ENCODE measurements at regions of chr6 and their contacts with region 1.

Region 1: DNA sequence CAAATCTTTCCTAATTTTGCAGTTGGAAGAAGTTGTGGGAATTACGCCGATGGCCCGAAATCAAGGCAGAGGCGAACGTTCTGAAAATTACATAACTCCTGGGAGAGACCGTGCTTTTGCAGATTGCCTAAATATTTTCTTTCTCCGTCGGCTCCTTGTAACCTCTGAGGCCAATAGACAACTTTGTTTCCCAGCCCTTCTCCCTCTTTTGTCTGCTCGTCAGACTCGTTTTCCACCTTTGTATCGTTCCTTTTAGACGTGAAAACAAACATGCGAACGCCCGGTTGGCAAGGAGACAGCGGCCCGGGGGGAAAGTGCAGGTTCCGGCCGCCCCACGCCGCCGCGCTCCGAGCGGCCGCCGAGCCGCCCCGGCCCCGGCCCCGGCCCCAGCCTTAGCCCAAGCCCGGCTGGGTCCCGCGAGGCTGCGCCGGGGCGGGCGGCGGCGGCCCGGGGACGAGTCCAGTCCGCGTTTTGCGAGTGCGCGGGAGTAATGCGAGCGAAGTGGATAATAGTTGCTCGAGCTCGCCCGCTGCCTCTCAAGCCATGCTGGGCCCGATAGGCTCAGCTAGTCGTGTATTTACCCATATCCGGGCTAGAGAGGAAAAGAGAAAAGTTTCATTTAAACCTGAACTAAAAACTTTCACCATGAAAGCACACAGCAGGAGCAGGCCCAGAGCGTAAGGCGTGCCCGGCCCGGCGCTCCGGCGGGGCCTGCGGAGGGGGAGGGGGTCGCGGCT is at the start of gene ARID1B:
- DNase-seq: peak; percentile 93
- H3K4me3 ChIP-seq: peak within 1 kb of the TSS; percentile 91 to 94 (median 92)
- H3K27ac ChIP-seq: peak within 1 kb of the TSS; percentile 97 to 99 (median 98)
- H3K4me1 ChIP-seq: peaks cover 3 to 38% (median 32%) of the 10 kb centered on the region in 4 donors
- H3K27me3 ChIP-seq: no peaks in the 10 kb centered on the region
- CTCF ChIP-seq: no peak
- EP300 ChIP-seq: no peak
- POLR2A ChIP-seq: peak in 1 of 2 donors; percentile 75
- total RNA-seq, gene ARID1B: 69.6 to 115 (median 78.8) TPM

Region 2: DNA sequence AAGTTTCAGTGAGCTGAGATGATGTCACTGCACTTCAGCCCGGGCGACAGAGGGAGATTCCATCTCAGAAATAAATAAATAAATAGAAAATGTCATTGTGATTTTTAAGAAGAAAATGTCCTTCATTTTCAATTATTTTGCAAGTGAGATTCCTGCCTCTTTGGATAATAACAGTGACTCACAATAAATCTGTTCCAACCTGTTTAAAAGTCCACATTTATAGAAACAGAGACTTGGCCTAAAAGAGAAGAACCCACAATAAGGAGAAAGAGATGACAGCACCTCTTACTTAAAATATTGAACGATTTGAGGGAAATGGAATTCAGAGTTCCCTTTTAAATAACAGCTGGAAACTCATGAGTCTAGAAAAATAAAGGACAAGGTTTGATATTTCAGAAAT is 948.0 kb before region 1 on chr6:
- intact Hi-C with region 1: no loop called
- DNase-seq: no peak
- H3K4me3 ChIP-seq: no peak overlapping the region
- H3K27ac ChIP-seq: no peak overlapping the region
- H3K4me1 ChIP-seq: no peaks in the 10 kb centered on the region
- H3K27me3 ChIP-seq: no peaks in the 10 kb centered on the region
- CTCF ChIP-seq: no peak
- EP300 ChIP-seq: no peak
- POLR2A ChIP-seq: no peak

Region 3: GRCh38 chr6:156564127-156564806 is 212.7 kb before region 1 on chr6:
- intact Hi-C with region 1: loop called (anchors 5 kb)
- DNase-seq: peak; percentile 90
- H3K4me3 ChIP-seq: no peak overlapping the region
- H3K27ac ChIP-seq: peak overlapping the region in 2 of 4 donors; percentile 18 to 27
- H3K4me1 ChIP-seq: peaks cover 0 to 15% (median 6%) of the 10 kb centered on the region in 4 donors
- H3K27me3 ChIP-seq: no peaks in the 10 kb centered on the region
- CTCF ChIP-seq: peak; percentile 80 to 93 (median 90)
- EP300 ChIP-seq: no peak
- POLR2A ChIP-seq: no peak

Region 4: DNA sequence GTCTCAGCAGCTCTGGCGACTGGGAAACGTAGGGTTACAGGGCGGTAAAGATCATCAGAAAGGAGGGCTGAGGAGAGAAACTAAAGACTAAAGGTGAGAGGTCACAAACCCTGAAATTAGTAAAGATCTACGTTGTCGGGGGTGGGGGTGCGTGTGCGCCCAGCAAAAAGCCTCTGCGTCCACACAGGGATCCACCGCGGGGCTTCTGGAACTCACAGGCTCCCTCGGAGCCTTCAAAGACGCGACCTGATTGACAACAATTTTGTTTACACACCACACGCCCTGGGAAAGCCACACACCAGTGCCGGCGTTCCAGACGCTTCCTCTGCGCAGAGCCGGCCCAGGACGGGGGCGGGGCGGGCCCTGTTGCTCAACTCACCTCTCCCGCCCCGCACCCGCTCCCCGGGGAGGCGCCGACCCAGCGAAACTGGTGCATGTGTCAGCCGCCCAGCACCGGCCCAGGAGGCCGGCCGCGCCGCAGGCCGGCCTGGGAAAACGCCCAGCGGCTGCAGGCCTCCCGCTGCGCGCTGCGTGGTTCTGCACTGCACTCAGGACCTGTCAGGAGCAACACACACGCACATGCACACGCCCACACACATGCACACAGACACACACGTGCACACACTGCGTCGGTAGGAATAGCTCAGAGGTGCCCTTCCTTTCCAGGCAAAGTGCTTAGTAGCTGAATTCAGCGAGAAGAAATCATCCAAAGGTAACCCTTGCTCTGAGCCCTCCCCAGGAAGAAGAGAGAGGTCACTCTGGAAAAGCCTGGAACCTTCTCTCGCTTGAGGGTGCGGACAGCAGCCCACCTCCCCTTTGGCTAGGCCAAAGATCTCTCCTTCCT is 57.1 kb before region 1 on chr6:
- intact Hi-C with region 1: loop called (anchors 1 kb)
- DNase-seq: peak; percentile 98
- H3K4me3 ChIP-seq: peak overlapping the region; percentile 28 to 51 (median 41)
- H3K27ac ChIP-seq: peak overlapping the region; percentile 80 to 92 (median 90)
- H3K4me1 ChIP-seq: peaks cover 0 to 25% (median 24%) of the 10 kb centered on the region in 4 donors
- H3K27me3 ChIP-seq: no peaks in the 10 kb centered on the region
- CTCF ChIP-seq: no peak
- EP300 ChIP-seq: peak in 1 of 4 donors; percentile 63
- POLR2A ChIP-seq: peak; percentile 21 to 33

Region 5: DNA sequence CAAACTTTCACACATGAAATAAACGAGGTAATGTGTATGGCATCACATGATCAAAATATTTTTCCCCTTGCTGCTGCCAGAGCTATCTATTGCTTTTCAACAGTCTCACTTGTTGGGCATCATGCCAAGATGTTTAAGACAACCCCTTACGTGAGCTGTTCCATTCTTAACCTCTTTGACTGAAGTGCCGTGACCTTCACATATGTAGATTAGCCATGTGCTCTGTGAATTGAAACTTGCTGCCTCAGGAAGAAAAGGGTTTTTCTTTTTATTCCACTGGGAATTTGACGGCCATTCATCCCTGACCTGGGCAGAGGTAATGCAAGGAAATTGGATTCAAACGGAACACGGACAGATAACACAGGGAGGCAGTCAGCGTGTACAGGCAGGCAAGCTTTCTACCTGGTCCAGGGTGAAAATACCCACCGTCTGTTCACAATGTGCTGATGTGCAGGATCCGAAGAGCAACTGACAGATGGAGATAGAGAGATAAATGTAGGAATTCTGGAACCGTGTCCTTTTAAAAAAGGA is 14.4 kb after region 1 on chr6:
- intact Hi-C with region 1: no loop called
- DNase-seq: no peak
- H3K4me3 ChIP-seq: no peak overlapping the region
- H3K27ac ChIP-seq: no peak overlapping the region
- H3K4me1 ChIP-seq: peaks cover 0 to 97% (median 85%) of the 10 kb centered on the region in 4 donors
- H3K27me3 ChIP-seq: no peaks in the 10 kb centered on the region
- CTCF ChIP-seq: no peak
- EP300 ChIP-seq: no peak
- POLR2A ChIP-seq: no peak

Region 6: DNA sequence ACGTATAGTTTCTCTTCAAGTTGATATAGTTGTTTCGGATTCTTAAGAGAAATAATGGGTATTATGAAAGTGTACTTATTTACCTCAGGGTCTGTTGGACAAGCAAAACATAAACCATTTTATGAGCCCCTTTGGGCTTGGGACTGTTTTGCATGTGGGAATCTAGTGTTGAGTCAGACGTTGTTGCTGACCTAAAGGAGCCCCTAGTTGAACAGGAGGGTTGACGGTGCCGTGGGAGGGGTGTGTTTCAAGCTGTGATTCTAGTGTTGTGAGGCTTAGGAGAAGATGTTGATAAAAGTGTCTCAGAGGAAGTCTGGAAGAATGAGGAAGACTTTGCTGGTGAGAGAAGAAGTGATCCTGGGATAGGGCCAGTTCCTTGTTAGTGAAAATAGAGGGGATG is 140.2 kb after region 1 on chr6:
- intact Hi-C with region 1: no loop called
- DNase-seq: no peak
- H3K4me3 ChIP-seq: no peak overlapping the region
- H3K27ac ChIP-seq: no peak overlapping the region
- H3K4me1 ChIP-seq: peaks cover 0 to 40% (median 26%) of the 10 kb centered on the region in 4 donors
- H3K27me3 ChIP-seq: no peaks in the 10 kb centered on the region
- CTCF ChIP-seq: no peak
- EP300 ChIP-seq: no peak
- POLR2A ChIP-seq: no peak

Region 7: DNA sequence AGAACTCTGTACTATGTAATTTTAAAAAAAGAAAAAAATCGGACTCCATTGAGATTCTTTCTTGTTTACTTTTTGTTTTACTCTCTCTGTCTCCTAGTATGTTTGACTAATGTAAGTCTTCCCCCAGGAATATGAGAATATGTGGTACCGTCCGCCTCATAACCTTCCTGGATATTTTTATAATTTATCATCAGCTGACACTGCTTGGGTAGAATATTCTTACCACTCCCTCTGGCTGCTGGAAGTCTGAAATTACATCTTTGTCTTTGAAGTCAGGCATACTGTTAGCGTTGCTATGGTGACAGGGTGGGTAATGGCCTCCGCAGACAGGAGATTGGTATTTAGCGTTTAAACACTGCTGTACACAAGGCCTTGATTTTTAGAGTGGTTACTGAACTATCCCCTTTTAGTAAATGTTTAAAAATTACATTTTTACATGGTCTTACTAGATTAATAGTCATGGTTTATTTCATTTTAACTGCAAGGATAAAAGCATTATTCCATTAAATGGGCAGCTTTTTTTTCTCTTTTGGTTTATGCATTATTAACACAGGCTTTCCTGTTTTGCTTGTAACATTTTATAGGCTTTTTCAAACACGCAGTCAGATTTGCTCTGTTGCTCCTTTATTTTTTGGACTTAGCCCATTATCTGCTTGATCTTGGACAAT is 176.6 kb after region 1 on chr6:
- intact Hi-C with region 1: loop called (anchors 5 kb)
- DNase-seq: no peak
- H3K4me3 ChIP-seq: no peak overlapping the region
- H3K27ac ChIP-seq: peak overlapping the region; percentile 34 to 73 (median 54)
- H3K4me1 ChIP-seq: peaks cover 0 to 82% (median 76%) of the 10 kb centered on the region in 4 donors
- H3K27me3 ChIP-seq: no peaks in the 10 kb centered on the region
- CTCF ChIP-seq: peak in 3 of 4 experiments; percentile 29 to 33 (median 31)
- EP300 ChIP-seq: no peak
- POLR2A ChIP-seq: no peak

Region 8: GRCh38 chr6:157021344-157021992 is 244.5 kb after region 1 on chr6:
- intact Hi-C with region 1: loop called (anchors 1 kb)
- DNase-seq: peak; percentile 97
- H3K4me3 ChIP-seq: peak overlapping the region; percentile 68 to 89 (median 76)
- H3K27ac ChIP-seq: peak overlapping the region; percentile 97 to 100 (median 100)
- H3K4me1 ChIP-seq: peaks cover 0 to 55% (median 41%) of the 10 kb centered on the region in 4 donors
- H3K27me3 ChIP-seq: no peaks in the 10 kb centered on the region
- CTCF ChIP-seq: peak in 2 of 4 experiments; percentile 38 to 48
- EP300 ChIP-seq: no peak
- POLR2A ChIP-seq: peak; percentile 82 to 92

Region 9: GRCh38 chr6:157184202-157185020 is 407.4 kb after region 1 on chr6:
- intact Hi-C with region 1: loop called (anchors 5 kb)
- DNase-seq: peak; percentile 83
- H3K4me3 ChIP-seq: peak overlapping the region in 1 of 4 donors; percentile 19
- H3K27ac ChIP-seq: peak overlapping the region in 1 of 4 donors; percentile 1
- H3K4me1 ChIP-seq: peaks cover 0 to 30% (median 29%) of the 10 kb centered on the region in 4 donors
- H3K27me3 ChIP-seq: no peaks in the 10 kb centered on the region
- CTCF ChIP-seq: peak; percentile 78 to 92 (median 84)
- EP300 ChIP-seq: no peak
- POLR2A ChIP-seq: no peak